ENCODE measurements at regions of chr4 and their contacts with region 1.

Region 1: GRCh38 chr4:15778289-15779241 is at the start of gene CD38:
- DNase-seq: peak; percentile 74
- H3K4me3 Mint-ChIP-seq: peak within 1 kb of the TSS; percentile 83
- H3K27ac Mint-ChIP-seq: peak within 1 kb of the TSS; percentile 72
- H3K4me1 Mint-ChIP-seq: peaks cover 47% of the 10 kb centered on the region
- H3K27me3 Mint-ChIP-seq: peaks cover 26% of the 10 kb centered on the region
- total RNA-seq, gene CD38: 11.6 to 12.0 TPM

Region 2: DNA sequence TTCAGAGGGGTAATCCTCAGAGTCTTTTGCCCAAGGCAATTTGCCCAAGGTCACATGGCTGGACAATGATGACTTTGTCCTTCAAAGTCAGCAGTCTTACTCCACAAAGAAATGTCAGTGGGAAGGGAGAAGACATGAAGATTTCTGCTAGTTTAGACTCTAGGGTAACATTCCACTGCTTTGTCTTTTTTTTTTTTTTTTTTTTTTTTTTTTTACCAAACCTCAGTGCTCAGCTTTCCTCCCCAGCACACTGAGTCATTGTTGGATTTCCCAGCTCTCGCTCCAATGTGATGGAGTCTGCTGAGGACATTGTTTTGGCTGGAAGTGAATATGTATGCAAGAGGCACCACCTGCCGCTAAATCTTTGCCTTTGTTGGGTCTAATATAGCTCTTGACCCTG is 357.9 kb before region 1 on chr4:
- CTCF ChIA-PET with region 1: no interaction called
- POLR2A ChIA-PET with region 1: no interaction called
- intact Hi-C with region 1: loop called (anchors 10 kb)
- DNase-seq: no peak
- H3K4me3 Mint-ChIP-seq: no peak overlapping the region
- H3K27ac Mint-ChIP-seq: no peak overlapping the region
- H3K4me1 Mint-ChIP-seq: peaks cover 27% of the 10 kb centered on the region
- H3K27me3 Mint-ChIP-seq: peaks cover 1% of the 10 kb centered on the region

Region 3: DNA sequence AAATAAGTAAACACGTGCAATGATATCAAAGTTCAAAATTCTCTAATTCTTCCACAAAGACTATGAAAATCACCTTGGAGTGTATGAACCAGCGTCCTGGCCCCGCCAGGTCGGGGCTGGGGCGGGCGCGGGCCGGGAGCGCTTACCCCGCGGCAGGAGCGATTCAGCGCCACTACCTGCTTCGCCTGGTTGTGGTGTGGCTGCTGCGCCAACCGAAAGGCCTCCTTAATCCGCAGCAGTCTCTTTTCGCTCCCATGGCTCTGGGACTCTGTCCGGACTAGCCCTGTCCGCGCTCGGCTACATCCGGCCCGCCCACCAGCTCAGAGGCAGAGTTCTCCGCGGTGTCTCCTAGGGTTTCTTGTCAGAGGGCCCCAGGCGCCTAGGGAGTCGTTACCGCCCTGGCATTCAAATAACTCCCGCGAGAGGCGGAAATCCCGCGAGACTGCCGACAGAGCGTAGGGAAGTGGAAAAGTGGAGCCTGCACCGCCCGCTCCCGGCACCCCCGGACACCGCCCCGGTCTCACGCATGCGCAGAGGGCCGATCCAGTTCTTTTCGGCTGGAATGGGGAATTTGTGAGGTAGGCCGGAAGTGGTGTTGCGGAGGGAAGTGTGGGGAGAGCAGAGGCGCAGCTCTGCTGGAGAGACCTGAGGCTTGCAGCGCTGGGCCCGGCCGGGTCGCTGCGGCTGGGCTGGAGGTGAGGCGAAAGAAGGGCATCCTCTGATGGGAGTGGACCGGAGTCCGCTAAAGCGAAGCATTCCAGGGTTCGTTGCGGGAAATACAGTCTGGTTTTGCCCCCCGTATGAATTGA is 97.2 kb before region 1 on chr4 and contains the start of gene FAM200B:
- CTCF ChIA-PET with region 1: no interaction called
- POLR2A ChIA-PET with region 1: no interaction called
- intact Hi-C with region 1: loop called (anchors 1 kb)
- DNase-seq: peak; percentile 99
- H3K4me3 Mint-ChIP-seq: peak within 1 kb of the TSS; percentile 99
- H3K27ac Mint-ChIP-seq: peak within 1 kb of the TSS; percentile 95
- H3K4me1 Mint-ChIP-seq: peaks cover 29% of the 10 kb centered on the region
- H3K27me3 Mint-ChIP-seq: no peaks in the 10 kb centered on the region
- total RNA-seq, gene FAM200B: 8.3 to 8.9 TPM

Region 4: GRCh38 chr4:15719506-15719905 is 59.1 kb before region 1 on chr4:
- CTCF ChIA-PET with region 1: no interaction called
- POLR2A ChIA-PET with region 1: no interaction called
- intact Hi-C with region 1: no loop called
- DNase-seq: no peak
- H3K4me3 Mint-ChIP-seq: no peak overlapping the region
- H3K27ac Mint-ChIP-seq: no peak overlapping the region
- H3K4me1 Mint-ChIP-seq: no peaks in the 10 kb centered on the region
- H3K27me3 Mint-ChIP-seq: no peaks in the 10 kb centered on the region

Region 5: GRCh38 chr4:15756361-15756861 is 22.2 kb before region 1 on chr4:
- CTCF ChIA-PET with region 1: interaction called, 30 read pairs
- POLR2A ChIA-PET with region 1: interaction called, 11 read pairs
- intact Hi-C with region 1: loop called (anchors 1 kb)
- DNase-seq: peak; percentile 88
- H3K4me3 Mint-ChIP-seq: peak overlapping the region; percentile 50
- H3K27ac Mint-ChIP-seq: peak overlapping the region; percentile 73
- H3K4me1 Mint-ChIP-seq: peaks cover 43% of the 10 kb centered on the region
- H3K27me3 Mint-ChIP-seq: no peaks in the 10 kb centered on the region

Region 6: GRCh38 chr4:15794905-15795304 is 16.3 kb after region 1 on chr4:
- CTCF ChIA-PET with region 1: no interaction called
- POLR2A ChIA-PET with region 1: interaction called, 3 read pairs
- intact Hi-C with region 1: loop called (anchors 1 kb)
- DNase-seq: no peak
- H3K4me3 Mint-ChIP-seq: no peak overlapping the region
- H3K27ac Mint-ChIP-seq: peak overlapping the region; percentile 10
- H3K4me1 Mint-ChIP-seq: peaks cover 29% of the 10 kb centered on the region
- H3K27me3 Mint-ChIP-seq: peaks cover 4% of the 10 kb centered on the region

Region 7: DNA sequence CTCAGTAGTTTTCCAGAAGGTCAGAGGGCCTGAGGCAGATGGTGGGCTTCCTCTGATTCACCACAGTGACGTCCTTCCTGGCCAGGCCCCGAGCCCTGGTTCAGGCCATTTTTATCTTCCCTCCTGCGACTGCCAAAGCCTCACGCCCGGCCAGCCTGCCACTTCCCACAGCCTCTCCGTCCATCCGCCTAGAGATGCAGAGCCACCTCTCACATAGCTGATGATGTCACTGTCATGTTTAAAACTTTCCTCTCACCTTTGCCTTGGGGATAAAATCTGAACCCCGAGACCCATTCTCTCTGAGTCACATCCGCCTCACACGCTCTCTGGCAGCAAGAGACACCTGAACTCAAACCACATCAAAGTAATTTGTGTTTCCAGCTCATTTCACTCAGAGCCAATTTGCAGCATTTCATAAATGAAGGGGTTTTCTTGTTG is 1558.0 kb after region 1 on chr4:
- CTCF ChIA-PET with region 1: no interaction called
- POLR2A ChIA-PET with region 1: no interaction called
- intact Hi-C with region 1: loop called (anchors 10 kb)
- DNase-seq: peak; percentile 87
- H3K4me3 Mint-ChIP-seq: peak overlapping the region; percentile 44
- H3K27ac Mint-ChIP-seq: peak overlapping the region; percentile 75
- H3K4me1 Mint-ChIP-seq: peaks cover 33% of the 10 kb centered on the region
- H3K27me3 Mint-ChIP-seq: no peaks in the 10 kb centered on the region